Astrocyte of the cerebellum (primary cell): ENCODE measurements at regions of chr17 and their contacts with region 1.

Region 1: GRCh38 chr17:79090443-79091225 is 16.0 kb downstream of the ENGASE start:
- DNase-seq: no peak
- H3K4me3 ChIP-seq: no peak overlapping the region
- CTCF ChIP-seq: peak; percentile 59

Region 2: GRCh38 chr17:79393358-79394202 is 302.9 kb after region 1 on chr17:
- in situ Hi-C with region 1: loop called (anchors 5 kb)
- DNase-seq: peak; percentile 27
- H3K4me3 ChIP-seq: no peak overlapping the region
- CTCF ChIP-seq: peak; percentile 94